Activated CD4-positive, alpha-beta T cell treated with anti-CD3 and anti-CD28 coated beads, Interleukin-2, amount 10 ng/mL, durations not matched to agents 7 days and 5 days (primary cell): ENCODE measurements at regions of chr1 and their contacts with region 1.

Region 1: DNA sequence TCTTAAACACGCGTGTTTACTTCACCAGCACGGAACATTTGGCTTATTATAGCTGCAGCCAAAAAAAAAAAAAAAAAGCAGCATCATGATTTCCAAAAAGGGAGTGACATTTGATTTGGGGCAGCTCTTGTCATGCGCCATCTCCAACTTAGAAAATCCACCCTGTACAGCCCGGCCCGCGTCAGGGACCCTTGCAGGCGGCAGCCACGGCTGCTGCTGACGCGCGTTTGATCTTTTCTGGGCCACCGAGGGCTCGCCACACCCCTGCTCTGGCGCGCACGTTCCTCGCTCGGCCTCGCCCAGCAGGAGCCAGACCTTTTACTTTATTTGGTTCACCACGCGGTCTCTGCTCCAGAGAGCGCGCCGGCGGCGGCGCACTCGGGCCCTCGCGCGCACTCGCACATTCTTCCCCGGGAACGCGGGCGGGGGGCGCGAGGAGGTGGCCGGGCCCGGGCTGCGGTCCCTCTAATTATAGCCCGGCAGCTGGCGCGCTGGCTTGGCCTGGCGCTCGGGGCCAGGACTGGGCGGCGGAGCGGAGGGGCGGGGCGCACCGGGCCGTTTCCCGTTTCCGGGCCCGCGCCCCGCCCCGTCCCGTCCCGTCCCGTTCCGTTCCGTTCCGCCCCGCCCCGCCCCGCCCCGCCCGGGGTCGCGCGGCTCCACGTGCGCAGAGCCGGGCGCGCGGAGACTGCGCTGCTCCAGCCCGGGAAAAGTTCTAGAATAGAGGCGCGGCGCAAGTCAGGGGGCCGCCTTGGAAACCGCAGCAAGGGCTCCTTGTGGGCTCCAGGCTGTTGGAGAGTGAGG is 10.2 kb downstream of the IRF2BP2 start:
- DNase-seq: peak; percentile 67
- H3K4me3 Mint-ChIP-seq: peak overlapping the region; percentile 82
- H3K27ac Mint-ChIP-seq: peak overlapping the region; percentile 96
- H3K4me1 Mint-ChIP-seq: peaks cover 61% of the 10 kb centered on the region
- H3K27me3 Mint-ChIP-seq: no peaks in the 10 kb centered on the region

Region 2: DNA sequence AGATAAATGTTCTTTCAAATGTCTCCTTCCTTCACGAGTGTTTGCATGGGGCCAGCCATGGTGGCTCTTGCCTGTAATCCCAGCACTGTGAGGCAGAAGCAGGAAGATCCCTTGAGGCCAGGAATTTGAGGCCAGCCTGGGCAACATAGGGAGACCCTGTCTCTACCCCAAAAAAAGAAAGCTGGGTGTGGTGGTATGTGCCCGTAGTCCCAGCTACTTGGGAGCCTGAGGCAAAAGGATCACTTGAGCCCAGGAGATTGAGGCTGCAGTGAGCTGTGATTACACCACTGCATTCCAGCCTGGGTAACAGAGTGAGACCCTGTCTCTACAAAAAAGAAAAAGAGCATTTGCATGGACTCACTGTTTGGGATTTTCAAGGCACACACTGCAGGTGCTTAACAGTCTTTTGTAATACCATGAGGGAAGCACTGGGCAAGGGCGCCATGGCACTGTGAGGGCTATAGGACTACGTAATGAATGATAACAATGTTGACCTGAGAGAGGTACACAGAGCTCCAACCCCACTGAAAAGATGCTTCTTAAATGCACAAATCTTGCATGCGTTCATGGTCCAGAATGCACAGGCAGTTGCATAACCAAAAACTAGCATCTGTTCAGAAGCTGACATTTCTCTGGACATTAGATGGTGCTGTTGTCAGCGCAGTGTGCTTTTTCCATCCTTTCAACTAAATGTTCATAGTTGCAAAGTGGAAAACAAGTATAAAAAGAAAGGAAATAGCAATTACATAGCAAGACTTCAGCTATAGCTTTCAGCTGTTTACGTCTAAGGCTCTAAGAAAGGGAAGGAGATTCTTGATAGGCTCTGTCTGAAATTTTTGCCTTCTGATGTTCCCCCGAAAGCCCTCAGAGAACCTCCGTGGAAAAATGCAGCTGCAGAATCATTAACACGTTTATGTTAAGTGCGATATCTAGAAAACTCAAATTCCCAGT is 113.0 kb before region 1 on chr1:
- CTCF ChIA-PET with region 1: interaction called, 10 read pairs
- POLR2A ChIA-PET with region 1: no interaction called
- DNase-seq: peak; percentile 46
- H3K4me3 Mint-ChIP-seq: no peak overlapping the region
- H3K27ac Mint-ChIP-seq: peak overlapping the region; percentile 76
- H3K4me1 Mint-ChIP-seq: peaks cover 42% of the 10 kb centered on the region
- H3K27me3 Mint-ChIP-seq: peaks cover 18% of the 10 kb centered on the region

Region 3: GRCh38 chr1:234558016-234558836 is 41.6 kb before region 1 on chr1:
- CTCF ChIA-PET with region 1: no interaction called
- POLR2A ChIA-PET with region 1: no interaction called
- DNase-seq: no peak
- H3K4me3 Mint-ChIP-seq: no peak overlapping the region
- H3K27ac Mint-ChIP-seq: no peak overlapping the region
- H3K4me1 Mint-ChIP-seq: no peaks in the 10 kb centered on the region
- H3K27me3 Mint-ChIP-seq: no peaks in the 10 kb centered on the region